ENCODE measurements at regions of chr16 and their contacts with region 1.

Region 1: GRCh38 chr16:67480833-67481560 is at the start of gene ATP6V0D1:
- DNase-seq: peak; percentile 100
- ATAC-seq: peak; percentile 92
- H3K4me3 Mint-ChIP-seq: peak within 1 kb of the TSS; percentile 97
- H3K27ac Mint-ChIP-seq: peak within 1 kb of the TSS; percentile 98
- H3K4me1 Mint-ChIP-seq: peaks cover 31% of the 10 kb centered on the region
- H3K27me3 Mint-ChIP-seq: no peaks in the 10 kb centered on the region
- total RNA-seq, gene ATP6V0D1: 16.3 to 17.3 TPM

Region 2: GRCh38 chr16:67226804-67227557 is 254.0 kb before region 1 on chr16 and contains the start of gene TMEM208:
- CTCF ChIA-PET with region 1: interaction called, 4 read pairs
- POLR2A ChIA-PET with region 1: no interaction called
- intact Hi-C with region 1: loop called in 1 of 2 experiments (anchors 1 kb)
- DNase-seq: peak; percentile 99
- ATAC-seq: peak; percentile 97
- H3K4me3 Mint-ChIP-seq: peak within 1 kb of the TSS; percentile 98
- H3K27ac Mint-ChIP-seq: peak within 1 kb of the TSS; percentile 98
- H3K4me1 Mint-ChIP-seq: peaks cover 42% of the 10 kb centered on the region
- H3K27me3 Mint-ChIP-seq: no peaks in the 10 kb centered on the region
- total RNA-seq, gene TMEM208: 13.6 to 31.2 TPM

Region 3: DNA sequence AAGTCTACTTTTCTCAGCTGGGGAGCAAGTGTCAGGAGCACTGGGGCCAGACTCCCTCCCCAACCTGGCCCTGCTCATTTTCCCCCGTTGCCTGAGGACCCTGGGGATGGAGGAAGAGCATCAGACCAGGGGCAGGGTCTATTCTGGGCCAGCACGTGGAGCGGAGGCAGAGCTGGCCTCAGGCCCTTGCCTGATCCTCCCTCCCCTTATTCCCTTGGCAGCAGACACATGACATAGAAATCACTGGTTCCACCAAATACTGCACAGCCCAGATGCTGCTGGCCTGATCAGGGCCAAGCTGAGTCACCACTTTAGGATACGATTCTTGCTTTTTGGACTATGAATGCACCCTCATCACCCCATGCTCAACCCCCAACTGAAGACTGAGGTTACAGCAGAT is 18.1 kb after region 1 on chr16:
- CTCF ChIA-PET with region 1: interaction called, 29 read pairs
- POLR2A ChIA-PET with region 1: no interaction called
- intact Hi-C with region 1: no loop called
- DNase-seq: no peak
- ATAC-seq: no peak
- H3K4me3 Mint-ChIP-seq: no peak overlapping the region
- H3K27ac Mint-ChIP-seq: no peak overlapping the region
- H3K4me1 Mint-ChIP-seq: peaks cover 9% of the 10 kb centered on the region
- H3K27me3 Mint-ChIP-seq: no peaks in the 10 kb centered on the region

Region 4: DNA sequence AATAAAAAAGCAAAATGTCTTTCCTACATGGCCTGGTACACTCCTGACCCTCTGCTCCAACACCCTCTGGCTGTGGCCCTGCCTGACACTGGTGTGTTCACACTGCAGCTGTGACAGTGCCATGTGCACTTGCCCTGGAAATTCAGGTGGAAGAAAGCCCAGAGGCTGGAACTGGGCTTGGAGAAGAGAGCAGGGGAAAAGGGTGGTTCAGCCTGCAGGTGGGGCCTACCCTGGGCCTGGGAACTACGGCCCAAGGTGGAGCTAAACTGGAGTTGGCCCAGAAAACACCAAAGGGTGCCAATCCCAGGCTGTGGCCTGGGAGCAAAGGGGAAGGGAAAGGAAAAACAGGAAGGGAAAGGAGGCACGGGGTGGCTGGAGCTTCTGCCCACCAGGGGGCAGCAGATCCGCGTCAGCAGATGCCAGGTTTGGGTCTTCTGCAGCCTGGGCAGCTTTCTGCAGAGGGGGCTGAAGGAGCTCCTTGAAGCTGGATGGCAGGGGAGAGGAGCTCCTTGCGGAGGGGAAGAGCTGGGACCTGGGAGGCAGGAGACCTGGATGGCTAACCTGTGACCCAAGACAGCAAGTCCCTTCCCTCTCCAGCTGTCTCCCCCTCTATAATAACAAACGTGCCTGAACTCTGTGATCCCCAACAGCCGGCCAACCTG is 65.9 kb after region 1 on chr16:
- CTCF ChIA-PET with region 1: interaction called, 17 read pairs
- POLR2A ChIA-PET with region 1: no interaction called
- intact Hi-C with region 1: no loop called
- DNase-seq: peak; percentile 86
- ATAC-seq: peak; percentile 63
- H3K4me3 Mint-ChIP-seq: no peak overlapping the region
- H3K27ac Mint-ChIP-seq: peak overlapping the region; percentile 89
- H3K4me1 Mint-ChIP-seq: peaks cover 35% of the 10 kb centered on the region
- H3K27me3 Mint-ChIP-seq: no peaks in the 10 kb centered on the region

Region 5: GRCh38 chr16:67694611-67695010 is 213.6 kb after region 1 on chr16:
- CTCF ChIA-PET with region 1: no interaction called
- POLR2A ChIA-PET with region 1: no interaction called
- intact Hi-C with region 1: no loop called
- DNase-seq: no peak
- ATAC-seq: no peak
- H3K4me3 Mint-ChIP-seq: no peak overlapping the region
- H3K27ac Mint-ChIP-seq: no peak overlapping the region
- H3K4me1 Mint-ChIP-seq: peaks cover 2% of the 10 kb centered on the region
- H3K27me3 Mint-ChIP-seq: no peaks in the 10 kb centered on the region

Region 6: DNA sequence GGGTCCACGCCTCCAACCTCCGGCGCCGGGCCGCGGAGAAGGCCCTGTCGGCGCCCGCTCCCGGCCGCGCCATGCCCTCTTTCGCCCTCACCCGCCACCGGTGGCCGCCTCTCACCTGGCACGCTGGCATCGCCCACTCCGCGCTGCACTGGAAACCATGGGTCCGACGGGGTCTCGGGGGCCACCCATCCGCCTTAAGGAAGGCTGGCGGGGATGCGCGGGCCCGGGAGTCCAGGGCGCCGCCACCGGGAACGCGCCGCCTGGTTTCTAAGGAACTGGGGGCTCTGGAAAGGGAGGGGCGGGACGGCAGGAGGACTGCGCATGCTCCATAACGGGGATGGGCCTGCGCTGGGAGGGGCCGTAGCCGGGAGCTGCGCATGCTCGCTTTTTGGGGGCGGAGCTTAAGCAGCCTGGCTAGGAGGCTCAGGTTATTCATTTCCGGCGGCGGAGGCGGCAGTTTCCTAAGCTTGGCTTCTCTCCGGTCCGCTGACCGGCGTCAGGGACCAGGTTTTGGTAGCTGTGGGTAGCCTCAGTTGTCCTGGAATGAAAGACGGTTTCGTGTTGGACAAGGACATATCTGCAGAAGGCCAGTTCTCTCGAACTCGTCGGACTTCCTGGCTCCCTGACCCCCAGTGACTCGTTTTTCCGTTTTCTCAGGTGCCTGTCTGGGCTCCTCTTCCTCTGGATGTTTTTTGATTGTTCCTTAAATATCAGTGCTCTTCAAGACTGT is 238.2 kb after region 1 on chr16 and contains the start of gene GFOD2:
- CTCF ChIA-PET with region 1: no interaction called
- POLR2A ChIA-PET with region 1: no interaction called
- intact Hi-C with region 1: loop called in 1 of 2 experiments (anchors 1 kb)
- DNase-seq: peak; percentile 99
- ATAC-seq: peak; percentile 95
- H3K4me3 Mint-ChIP-seq: peak within 1 kb of the TSS; percentile 82
- H3K27ac Mint-ChIP-seq: peak within 1 kb of the TSS; percentile 98
- H3K4me1 Mint-ChIP-seq: peaks cover 29% of the 10 kb centered on the region
- H3K27me3 Mint-ChIP-seq: no peaks in the 10 kb centered on the region
- total RNA-seq, gene GFOD2: 8.7 to 11.5 TPM

Region 7: DNA sequence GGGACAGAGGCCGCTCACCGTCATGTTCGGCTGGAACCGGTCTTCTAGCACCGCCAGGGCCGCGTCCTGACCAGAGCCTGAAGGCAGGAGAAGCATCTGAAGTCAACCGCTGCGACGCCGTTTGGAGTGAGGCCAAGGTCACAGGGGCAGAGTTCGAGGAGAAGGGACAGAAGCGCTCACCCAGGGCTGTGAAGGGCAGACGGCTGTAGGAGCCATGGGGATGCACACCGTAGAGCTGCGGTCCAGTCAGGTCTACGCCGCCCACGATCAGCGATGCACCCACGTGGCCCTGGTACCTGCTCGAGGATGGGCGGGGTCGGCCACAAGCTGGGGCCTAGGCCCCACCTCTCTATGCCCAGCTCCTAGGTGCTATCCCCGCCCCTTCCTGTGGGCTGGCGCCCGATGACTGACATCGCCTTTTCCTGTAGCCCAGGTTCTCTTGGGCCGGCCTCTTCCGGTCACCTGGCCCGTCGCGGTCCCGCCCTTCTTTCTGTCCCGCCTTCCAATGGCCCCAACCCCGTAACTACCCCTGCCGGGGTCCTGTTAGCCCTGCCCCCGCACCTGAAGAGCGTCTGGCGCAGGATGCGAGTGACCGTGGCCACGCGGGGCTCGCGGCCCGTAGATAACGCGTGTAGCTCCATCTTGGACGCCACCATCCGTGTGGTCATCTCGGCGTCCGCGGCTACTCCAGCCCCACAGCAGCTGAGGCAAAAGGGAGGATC is 454.6 kb after region 1 on chr16:
- CTCF ChIA-PET with region 1: no interaction called
- POLR2A ChIA-PET with region 1: no interaction called
- intact Hi-C with region 1: loop called in 1 of 2 experiments (anchors 1 kb)
- DNase-seq: peak; percentile 98
- ATAC-seq: peak; percentile 91
- H3K4me3 Mint-ChIP-seq: peak overlapping the region; percentile 100
- H3K27ac Mint-ChIP-seq: peak overlapping the region; percentile 100
- H3K4me1 Mint-ChIP-seq: peaks cover 37% of the 10 kb centered on the region
- H3K27me3 Mint-ChIP-seq: no peaks in the 10 kb centered on the region

Measured in activated CD4-positive, alpha-beta T cell treated with anti-CD3 and anti-CD28 coated beads for 36 hours (primary cell).